ENCODE measurements at regions of chr17 and their contacts with region 1.

Region 1: DNA sequence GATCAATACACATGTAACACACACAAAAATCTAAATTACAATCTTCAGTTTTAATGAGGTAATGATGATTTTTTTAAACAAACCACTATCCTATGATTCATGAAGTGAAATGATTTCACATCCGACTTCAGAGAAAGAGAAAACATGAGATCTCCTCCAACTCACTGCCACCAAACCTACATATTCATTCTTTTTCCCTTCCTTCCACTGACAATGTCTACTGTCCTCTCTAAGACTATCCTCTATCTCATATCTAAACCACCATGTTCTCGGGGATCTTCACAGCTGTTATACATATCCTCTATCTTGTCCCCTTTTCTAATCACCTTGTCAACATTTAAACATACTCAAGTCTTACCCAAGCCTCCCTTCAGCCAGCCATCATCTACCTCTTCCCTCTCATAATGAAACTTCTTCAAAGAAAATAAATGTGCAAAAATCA is 53.5 kb downstream of the SMURF2 start:
- DNase-seq: peak; percentile 55
- H3K4me3 ChIP-seq: no peak overlapping the region
- H3K27ac ChIP-seq: peak overlapping the region; percentile 34
- H3K4me1 ChIP-seq: peaks cover 13% of the 10 kb centered on the region
- H3K27me3 ChIP-seq: no peaks in the 10 kb centered on the region
- CTCF ChIP-seq: no peak
- POLR2A ChIP-seq: peak; percentile 34

Region 2: GRCh38 chr17:64354824-64355535 is 253.6 kb before region 1 on chr17:
- CTCF ChIA-PET with region 1: no interaction called
- POLR2A ChIA-PET with region 1: no interaction called
- dilution Hi-C with region 1: no loop called
- intact Hi-C with region 1: no loop called
- DNase-seq: peak; percentile 82
- H3K4me3 ChIP-seq: no peak overlapping the region
- H3K27ac ChIP-seq: peak overlapping the region; percentile 38
- H3K4me1 ChIP-seq: peaks cover 52% of the 10 kb centered on the region
- H3K27me3 ChIP-seq: no peaks in the 10 kb centered on the region
- CTCF ChIP-seq: no peak
- POLR2A ChIP-seq: peak; percentile 19

Region 3: GRCh38 chr17:64622931-64623654 is 14.5 kb after region 1 on chr17:
- CTCF ChIA-PET with region 1: interaction called, 7 read pairs
- POLR2A ChIA-PET with region 1: interaction called, 4 read pairs
- dilution Hi-C with region 1: no loop called
- intact Hi-C with region 1: loop called (anchors 2 kb)
- DNase-seq: peak; percentile 97
- H3K4me3 ChIP-seq: no peak overlapping the region
- H3K27ac ChIP-seq: peak overlapping the region; percentile 88
- H3K4me1 ChIP-seq: peaks cover 82% of the 10 kb centered on the region
- H3K27me3 ChIP-seq: no peaks in the 10 kb centered on the region
- CTCF ChIP-seq: no peak
- POLR2A ChIP-seq: no peak

Measured in endothelial cell of umbilical vein (primary cell).